ENCODE measurements at regions of chr9 and their contacts with region 1.

Region 1: DNA sequence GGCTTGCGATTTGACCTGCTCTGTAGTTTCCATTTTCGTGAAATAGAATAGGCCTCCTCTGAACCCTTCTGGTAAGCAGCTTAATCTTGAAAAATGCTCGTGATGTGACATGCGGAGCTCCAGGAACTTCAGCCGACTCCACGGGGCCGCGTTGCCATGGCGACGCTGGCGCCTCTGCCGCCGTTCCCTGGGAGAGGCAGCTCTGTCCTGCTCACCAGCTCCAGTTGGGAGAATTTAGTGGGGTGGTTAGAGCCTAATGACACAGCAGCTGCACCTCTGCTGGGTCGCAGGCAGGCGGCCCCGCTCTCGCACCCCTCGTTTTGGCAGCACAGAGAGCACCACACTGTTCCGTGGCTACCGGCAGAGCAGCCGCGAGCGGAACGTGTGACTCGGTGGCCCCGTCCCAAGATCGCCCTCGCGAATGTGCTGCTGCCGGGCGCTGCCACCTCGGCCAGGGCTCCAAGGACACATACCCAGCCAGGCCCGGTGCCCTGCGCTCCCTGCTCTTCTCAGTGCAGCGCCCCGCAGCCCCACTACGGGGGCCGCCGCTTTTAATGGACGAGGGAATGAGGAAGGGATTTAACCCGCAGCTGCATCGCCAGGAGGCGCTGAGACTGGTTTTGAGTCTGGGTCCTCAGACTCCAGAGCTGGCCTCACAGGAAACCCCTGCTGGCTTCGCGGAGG is 131.2 kb upstream of the LMX1B start:
- DNase-seq: no peak
- H3K4me3 ChIP-seq: no peak overlapping the region
- CTCF ChIP-seq: no peak
- POLR2A ChIP-seq: no peak

Region 2: GRCh38 chr9:126301985-126302603 is 180.4 kb before region 1 on chr9:
- intact Hi-C with region 1: loop called (anchors 5 kb)
- DNase-seq: peak; percentile 67 to 91
- H3K4me3 ChIP-seq: no peak overlapping the region
- CTCF ChIP-seq: peak in 1 of 3 donors; percentile 19
- POLR2A ChIP-seq: no peak

Measured in lower leg skin (tissue), 4 donors.